ENCODE measurements at regions of chr1 and their contacts with region 1.

Region 1: DNA sequence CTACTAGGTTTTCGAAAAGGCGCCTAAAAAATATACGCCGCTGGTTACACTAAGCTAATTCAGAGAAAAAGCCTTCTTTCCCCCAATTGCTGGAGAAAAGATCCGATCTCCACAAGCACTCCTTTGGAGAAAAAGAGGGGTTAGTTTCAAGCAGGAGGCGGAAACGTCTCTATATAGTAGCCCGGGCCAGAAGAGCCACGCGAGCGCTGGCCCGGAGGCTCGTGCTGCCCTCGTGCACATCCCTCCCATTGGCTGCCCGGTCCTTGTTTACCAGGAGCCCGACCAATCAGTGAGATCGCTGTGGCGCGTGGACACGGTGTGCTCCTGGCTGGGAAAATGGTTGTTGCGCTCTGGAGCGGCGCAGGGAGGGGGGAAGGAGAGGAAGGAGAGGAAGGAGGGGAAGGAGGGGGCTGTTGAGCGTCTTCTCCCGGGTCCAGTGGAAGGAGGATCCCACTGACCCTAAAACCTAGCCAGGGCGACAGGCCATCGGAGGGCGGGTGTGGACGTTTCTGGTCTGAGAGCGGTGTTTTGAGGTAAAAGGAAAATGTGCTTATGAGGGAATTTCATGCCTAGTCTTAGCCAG is at the start of gene TXNIP:
- DNase-seq: peak; percentile 97
- ATAC-seq: peak; percentile 94
- H3K4me3 Mint-ChIP-seq: peak within 1 kb of the TSS; percentile 87
- H3K27ac Mint-ChIP-seq: peak within 1 kb of the TSS; percentile 95
- H3K4me1 Mint-ChIP-seq: peaks cover 59% of the 10 kb centered on the region
- H3K27me3 Mint-ChIP-seq: no peaks in the 10 kb centered on the region
- total RNA-seq, gene TXNIP: 190 to 195 TPM

Region 2: GRCh38 chr1:145918144-145918992 is 78.2 kb before region 1 on chr1 and contains the start of gene PEX11B:
- CTCF ChIA-PET with region 1: no interaction called
- POLR2A ChIA-PET with region 1: interaction called, 12 read pairs
- DNase-seq: peak; percentile 94
- ATAC-seq: peak; percentile 94
- H3K4me3 Mint-ChIP-seq: peak within 1 kb of the TSS; percentile 92
- H3K27ac Mint-ChIP-seq: peak within 1 kb of the TSS; percentile 99
- H3K4me1 Mint-ChIP-seq: peaks cover 34% of the 10 kb centered on the region
- H3K27me3 Mint-ChIP-seq: no peaks in the 10 kb centered on the region
- total RNA-seq, gene PEX11B: 33.3 to 35.9 TPM

Region 3: GRCh38 chr1:145927063-145927886 is 69.2 kb before region 1 on chr1 and contains the start of gene RBM8A:
- CTCF ChIA-PET with region 1: no interaction called
- POLR2A ChIA-PET with region 1: interaction called, 33 read pairs
- DNase-seq: peak; percentile 98
- ATAC-seq: peak; percentile 98
- H3K4me3 Mint-ChIP-seq: no peak within 1 kb of the TSS
- H3K27ac Mint-ChIP-seq: peak within 1 kb of the TSS; percentile 79
- H3K4me1 Mint-ChIP-seq: peaks cover 25% of the 10 kb centered on the region
- H3K27me3 Mint-ChIP-seq: no peaks in the 10 kb centered on the region
- total RNA-seq, gene RBM8A: 202 to 204 TPM

Region 4: GRCh38 chr1:145985502-145986439 is 10.8 kb before region 1 on chr1:
- CTCF ChIA-PET with region 1: interaction called, 235 read pairs
- POLR2A ChIA-PET with region 1: interaction called, 373 read pairs
- DNase-seq: no peak
- ATAC-seq: no peak
- H3K4me3 Mint-ChIP-seq: no peak overlapping the region
- H3K27ac Mint-ChIP-seq: peak overlapping the region; percentile 67
- H3K4me1 Mint-ChIP-seq: peaks cover 54% of the 10 kb centered on the region
- H3K27me3 Mint-ChIP-seq: no peaks in the 10 kb centered on the region

Region 5: DNA sequence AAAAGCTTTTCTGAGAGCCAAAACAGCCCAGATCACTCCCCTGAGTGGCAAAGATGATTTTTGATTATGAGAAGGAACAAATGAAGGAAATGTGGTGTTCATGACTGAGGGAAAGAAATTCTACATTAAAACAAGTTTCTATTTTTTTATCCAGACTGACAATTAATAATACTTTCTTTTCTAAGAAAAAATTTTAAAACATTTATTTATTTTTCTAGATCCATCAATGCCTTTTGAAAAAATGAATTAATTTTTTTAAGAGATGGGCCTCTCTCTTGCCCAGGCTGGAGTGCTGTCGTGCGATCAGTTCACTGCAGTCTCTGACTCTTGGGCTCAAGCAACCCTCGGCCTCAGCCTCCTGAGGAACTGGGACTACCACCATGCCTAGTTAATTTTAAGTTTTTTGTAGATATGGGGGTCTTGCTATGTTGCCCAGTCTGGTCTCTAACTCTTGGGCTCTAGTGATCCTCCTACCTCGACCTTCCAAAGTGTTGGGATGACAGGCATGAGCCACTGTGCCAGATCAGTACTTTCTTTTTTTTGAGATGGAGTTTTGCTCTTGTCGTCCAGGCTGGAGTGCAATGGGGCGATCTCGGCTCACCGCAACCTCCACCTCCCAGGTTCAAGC is 11.1 kb after region 1 on chr1:
- CTCF ChIA-PET with region 1: interaction called, 49 read pairs
- POLR2A ChIA-PET with region 1: interaction called, 23 read pairs
- DNase-seq: no peak
- ATAC-seq: no peak
- H3K4me3 Mint-ChIP-seq: peak overlapping the region; percentile 69
- H3K27ac Mint-ChIP-seq: peak overlapping the region; percentile 91
- H3K4me1 Mint-ChIP-seq: peaks cover 39% of the 10 kb centered on the region
- H3K27me3 Mint-ChIP-seq: no peaks in the 10 kb centered on the region

Region 6: DNA sequence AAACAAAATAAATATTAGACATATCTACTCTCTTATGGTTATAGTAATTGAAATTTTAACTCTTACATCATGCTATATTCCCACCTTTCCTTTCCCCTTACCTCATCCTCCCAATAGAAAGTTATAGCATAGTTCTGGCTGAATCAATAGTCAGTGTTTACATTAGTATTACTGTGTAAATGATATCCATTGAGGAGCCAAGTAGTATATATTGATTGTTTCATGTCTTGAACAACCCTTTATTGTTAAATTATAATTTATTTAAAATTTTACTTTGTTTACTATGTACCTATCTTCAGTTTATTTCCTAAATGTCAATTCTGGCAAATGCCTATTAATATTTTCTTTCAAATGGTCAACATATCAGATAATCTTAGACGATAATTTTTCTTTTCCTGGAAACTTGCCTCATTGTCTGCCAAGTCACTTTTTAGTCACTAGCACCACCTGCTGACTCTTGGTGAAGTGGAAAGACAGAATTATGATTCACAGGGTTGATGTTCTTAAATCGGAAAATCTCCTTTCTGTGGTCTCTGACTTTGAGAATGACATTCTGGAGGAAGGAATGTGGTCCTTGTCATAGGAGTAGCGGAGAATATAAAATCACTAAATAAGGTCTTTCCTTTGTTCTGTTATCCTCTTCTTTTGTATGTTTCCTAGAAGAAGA is 16.3 kb after region 1 on chr1:
- CTCF ChIA-PET with region 1: interaction called, 49 read pairs
- POLR2A ChIA-PET with region 1: interaction called, 10 read pairs
- DNase-seq: peak; percentile 77
- ATAC-seq: peak; percentile 84
- H3K4me3 Mint-ChIP-seq: no peak overlapping the region
- H3K27ac Mint-ChIP-seq: no peak overlapping the region
- H3K4me1 Mint-ChIP-seq: peaks cover 13% of the 10 kb centered on the region
- H3K27me3 Mint-ChIP-seq: peaks cover 19% of the 10 kb centered on the region

Region 7: GRCh38 chr1:146036965-146037646 is 40.6 kb after region 1 on chr1:
- CTCF ChIA-PET with region 1: interaction called, 5 read pairs
- POLR2A ChIA-PET with region 1: interaction called, 12 read pairs
- DNase-seq: peak; percentile 88
- ATAC-seq: peak; percentile 52
- H3K4me3 Mint-ChIP-seq: peak overlapping the region; percentile 91
- H3K27ac Mint-ChIP-seq: peak overlapping the region; percentile 95
- H3K4me1 Mint-ChIP-seq: peaks cover 48% of the 10 kb centered on the region
- H3K27me3 Mint-ChIP-seq: peaks cover 6% of the 10 kb centered on the region